ENCODE measurements at regions of chr5 and their contacts with region 1.

Region 1: GRCh38 chr5:54443270-54443669 is 12.2 kb upstream of the HSPB3 start:
- DNase-seq: peak in 1 of 2 experiments; percentile 57
- H3K4me3 ChIP-seq: no peak overlapping the region
- H3K4me3 Mint-ChIP-seq: no peak overlapping the region
- H3K27ac Mint-ChIP-seq: peak overlapping the region; percentile 56
- H3K4me1 ChIP-seq: peaks cover 91% of the 10 kb centered on the region
- H3K4me1 Mint-ChIP-seq: peaks cover 51% of the 10 kb centered on the region
- H3K27me3 ChIP-seq: no peaks in the 10 kb centered on the region
- H3K27me3 Mint-ChIP-seq: no peaks in the 10 kb centered on the region
- CTCF ChIP-seq: peak; percentile 50 to 51

Region 2: DNA sequence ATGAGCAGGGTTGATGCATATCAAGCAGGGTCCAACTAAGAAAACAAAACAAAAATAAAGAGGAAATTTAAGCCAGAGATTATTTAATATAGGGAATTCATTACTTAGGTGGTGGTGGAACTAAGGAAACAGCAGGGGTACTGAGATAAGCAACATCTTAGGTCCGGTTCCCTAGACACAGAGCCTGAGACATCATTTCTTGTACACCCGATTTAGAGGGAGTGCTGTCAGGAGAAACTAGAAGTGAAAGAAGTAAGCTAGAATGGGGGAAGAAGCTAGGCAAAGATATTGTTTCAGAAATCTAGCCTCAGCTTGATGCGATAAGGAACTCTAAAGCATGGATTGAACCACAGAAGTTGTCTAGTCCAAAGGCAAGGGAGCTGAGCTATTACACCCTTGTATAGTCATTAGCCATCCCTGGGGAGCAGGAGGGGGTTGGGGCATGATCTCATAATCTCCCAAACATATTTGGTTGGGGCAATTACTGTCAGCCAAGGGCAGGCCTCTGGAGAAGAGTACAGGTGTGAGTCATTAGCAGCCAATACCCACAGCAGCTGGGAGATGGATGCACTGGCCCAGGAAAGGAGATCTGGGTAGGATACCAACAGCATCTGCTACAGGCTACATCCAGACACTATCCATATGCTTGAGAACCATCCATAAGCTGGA is 327.4 kb before region 1 on chr5:
- CTCF ChIA-PET with region 1: no interaction called
- POLR2A ChIA-PET with region 1: no interaction called
- intact Hi-C with region 1: no loop called
- DNase-seq: no peak
- H3K4me3 ChIP-seq: no peak overlapping the region
- H3K4me3 Mint-ChIP-seq: no peak overlapping the region
- H3K27ac Mint-ChIP-seq: no peak overlapping the region
- H3K4me1 ChIP-seq: no peaks in the 10 kb centered on the region
- H3K4me1 Mint-ChIP-seq: no peaks in the 10 kb centered on the region
- H3K27me3 ChIP-seq: no peaks in the 10 kb centered on the region
- H3K27me3 Mint-ChIP-seq: no peaks in the 10 kb centered on the region
- CTCF ChIP-seq: no peak

Region 3: GRCh38 chr5:54186912-54187445 is 256.3 kb before region 1 on chr5:
- CTCF ChIA-PET with region 1: no interaction called
- POLR2A ChIA-PET with region 1: no interaction called
- intact Hi-C with region 1: no loop called
- DNase-seq: no peak
- H3K4me3 ChIP-seq: no peak overlapping the region
- H3K4me3 Mint-ChIP-seq: no peak overlapping the region
- H3K27ac Mint-ChIP-seq: no peak overlapping the region
- H3K4me1 ChIP-seq: peaks cover 10% of the 10 kb centered on the region
- H3K4me1 Mint-ChIP-seq: peaks cover 19% of the 10 kb centered on the region
- H3K27me3 ChIP-seq: no peaks in the 10 kb centered on the region
- H3K27me3 Mint-ChIP-seq: no peaks in the 10 kb centered on the region
- CTCF ChIP-seq: no peak

Region 4: DNA sequence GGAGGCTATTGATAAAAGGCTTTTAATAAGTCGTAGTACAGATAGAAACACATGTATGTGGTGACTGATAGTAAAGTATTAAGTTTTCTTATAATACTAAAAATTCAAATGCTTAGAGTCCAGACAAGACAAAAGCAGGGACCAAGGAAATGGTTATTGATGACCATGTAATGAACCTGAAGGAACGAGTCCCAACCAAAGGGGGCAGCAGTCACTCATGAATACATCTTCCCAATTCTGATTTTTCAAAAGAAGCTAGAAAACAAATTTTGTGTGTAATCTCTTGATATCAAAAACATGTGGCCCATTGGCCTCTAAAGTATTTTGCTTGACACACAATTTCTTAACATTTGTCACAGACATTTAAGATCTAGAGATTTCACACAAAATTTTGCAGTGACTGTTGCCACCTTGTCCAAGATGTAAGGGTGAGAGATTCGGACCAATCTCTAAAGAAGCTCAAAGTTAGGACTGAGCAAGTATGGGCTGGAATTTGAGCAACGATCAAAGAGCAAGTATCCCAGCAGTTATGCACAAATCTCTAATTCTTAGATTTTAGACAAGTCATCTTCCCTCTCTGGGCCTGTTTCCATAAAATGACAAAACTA is 199.7 kb before region 1 on chr5:
- CTCF ChIA-PET with region 1: no interaction called
- POLR2A ChIA-PET with region 1: no interaction called
- intact Hi-C with region 1: loop called (anchors 2 kb)
- DNase-seq: peak in 1 of 2 experiments; percentile 62
- H3K4me3 ChIP-seq: no peak overlapping the region
- H3K4me3 Mint-ChIP-seq: no peak overlapping the region
- H3K27ac Mint-ChIP-seq: no peak overlapping the region
- H3K4me1 ChIP-seq: 0 out of 2 replicates have a peak, but pooled peaks cover 9% of the 10 kb centered on the region
- H3K4me1 Mint-ChIP-seq: peaks cover 10% of the 10 kb centered on the region
- H3K27me3 ChIP-seq: no peaks in the 10 kb centered on the region
- H3K27me3 Mint-ChIP-seq: no peaks in the 10 kb centered on the region
- CTCF ChIP-seq: peak; percentile 78 to 83

Region 5: GRCh38 chr5:54252002-54252401 is 191.3 kb before region 1 on chr5:
- CTCF ChIA-PET with region 1: no interaction called
- POLR2A ChIA-PET with region 1: no interaction called
- intact Hi-C with region 1: loop called (anchors 2 kb)
- DNase-seq: peak; percentile 40 to 59
- H3K4me3 ChIP-seq: no peak overlapping the region
- H3K4me3 Mint-ChIP-seq: no peak overlapping the region
- H3K27ac Mint-ChIP-seq: peak overlapping the region; percentile 30
- H3K4me1 ChIP-seq: peaks cover 42% of the 10 kb centered on the region
- H3K4me1 Mint-ChIP-seq: peaks cover 9% of the 10 kb centered on the region
- H3K27me3 ChIP-seq: no peaks in the 10 kb centered on the region
- H3K27me3 Mint-ChIP-seq: no peaks in the 10 kb centered on the region
- CTCF ChIP-seq: no peak

Region 6: DNA sequence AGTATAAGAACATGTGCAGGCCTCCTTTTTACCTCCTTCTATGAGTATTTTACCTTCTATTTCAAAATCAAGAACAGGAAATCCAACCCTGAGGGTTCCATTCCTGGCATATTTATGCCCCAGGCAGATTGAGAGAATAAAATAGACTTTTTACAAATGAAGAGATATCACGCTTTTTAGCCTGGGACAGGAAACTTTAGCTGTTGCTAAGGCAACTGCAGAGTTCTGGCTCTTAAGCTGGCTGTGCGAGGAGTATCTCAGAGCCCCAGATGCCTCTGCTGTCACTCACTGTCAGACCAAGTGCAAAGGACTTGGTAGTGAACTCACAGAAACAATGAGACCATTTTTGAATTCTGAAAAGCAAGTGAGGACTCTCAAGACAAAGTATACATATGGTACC is 57.3 kb before region 1 on chr5:
- CTCF ChIA-PET with region 1: interaction called, 3 read pairs
- POLR2A ChIA-PET with region 1: interaction called, 4 read pairs
- intact Hi-C with region 1: loop called (anchors 1 kb)
- DNase-seq: no peak
- H3K4me3 ChIP-seq: no peak overlapping the region
- H3K4me3 Mint-ChIP-seq: no peak overlapping the region
- H3K27ac Mint-ChIP-seq: no peak overlapping the region
- H3K4me1 ChIP-seq: peaks cover 47% of the 10 kb centered on the region
- H3K4me1 Mint-ChIP-seq: peaks cover 26% of the 10 kb centered on the region
- H3K27me3 ChIP-seq: no peaks in the 10 kb centered on the region
- H3K27me3 Mint-ChIP-seq: no peaks in the 10 kb centered on the region
- CTCF ChIP-seq: no peak

Region 7: DNA sequence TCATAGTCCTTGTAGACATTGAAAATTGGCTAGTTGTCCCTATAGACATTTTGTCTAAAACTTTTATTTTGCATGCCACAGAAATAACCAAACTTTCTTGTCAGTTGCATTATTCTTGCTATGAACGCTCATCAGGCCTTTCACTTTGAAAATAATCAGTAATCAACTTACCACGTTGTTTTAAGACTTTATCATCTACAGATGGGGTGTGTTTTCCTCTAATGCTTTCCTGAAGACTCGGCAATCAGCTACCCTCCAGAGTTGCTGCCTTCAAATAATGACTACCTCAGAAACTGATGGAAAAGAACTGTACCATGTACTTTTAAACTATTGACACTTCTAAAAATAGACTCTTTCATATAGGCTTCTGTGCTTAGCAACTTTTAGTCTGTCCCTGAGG is 21.3 kb before region 1 on chr5:
- CTCF ChIA-PET with region 1: interaction called, 3 read pairs
- POLR2A ChIA-PET with region 1: no interaction called
- intact Hi-C with region 1: loop called (anchors 2 kb)
- DNase-seq: no peak
- H3K4me3 ChIP-seq: no peak overlapping the region
- H3K4me3 Mint-ChIP-seq: no peak overlapping the region
- H3K27ac Mint-ChIP-seq: no peak overlapping the region
- H3K4me1 ChIP-seq: peaks cover 10% of the 10 kb centered on the region; the same call in 1 of the 2 replicates
- H3K4me1 Mint-ChIP-seq: peaks cover 15% of the 10 kb centered on the region
- H3K27me3 ChIP-seq: no peaks in the 10 kb centered on the region
- H3K27me3 Mint-ChIP-seq: no peaks in the 10 kb centered on the region
- CTCF ChIP-seq: no peak

Region 8: DNA sequence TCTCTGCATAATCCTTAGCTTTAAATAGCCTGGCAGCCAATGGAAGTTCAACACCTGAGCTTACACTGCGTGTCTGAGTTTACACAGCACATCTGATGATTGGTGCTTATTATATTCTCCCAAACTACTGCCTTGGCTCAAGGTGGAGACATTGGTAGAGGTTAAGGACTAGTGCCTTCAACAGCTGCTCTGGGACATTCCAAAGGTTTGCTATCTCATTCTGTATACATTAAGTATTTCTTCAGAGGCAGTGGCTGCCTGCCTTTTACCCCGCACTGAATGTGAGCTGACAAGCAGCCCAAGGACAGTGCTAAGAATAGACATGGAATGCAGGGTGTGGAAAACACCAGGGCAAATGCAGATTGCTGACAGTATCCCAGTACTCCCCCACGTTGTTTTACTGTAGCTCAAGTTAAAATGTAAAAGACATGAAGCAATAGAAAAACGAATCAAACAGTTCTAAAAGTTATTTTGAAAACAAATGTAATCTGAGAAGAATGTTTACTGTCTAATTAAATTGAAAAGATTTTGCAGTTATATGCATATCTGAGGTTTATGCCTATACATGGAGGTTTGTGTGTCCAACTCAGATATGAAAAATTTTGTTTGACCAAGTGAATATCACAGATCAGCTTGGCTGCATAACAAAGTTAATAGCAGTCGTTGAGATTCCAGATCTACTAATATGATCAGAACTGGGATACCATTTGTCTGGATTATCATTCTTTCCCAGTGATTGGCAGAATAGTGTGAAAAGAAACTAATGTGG is 14.0 kb after region 1 on chr5:
- CTCF ChIA-PET with region 1: interaction called, 16 read pairs
- POLR2A ChIA-PET with region 1: interaction called, 30 read pairs
- intact Hi-C with region 1: loop called (anchors 1 kb)
- DNase-seq: peak; percentile 89 to 96
- H3K4me3 ChIP-seq: no peak overlapping the region
- H3K4me3 Mint-ChIP-seq: peak overlapping the region; percentile 55
- H3K27ac Mint-ChIP-seq: peak overlapping the region; percentile 94
- H3K4me1 ChIP-seq: peaks cover 39% of the 10 kb centered on the region
- H3K4me1 Mint-ChIP-seq: peaks cover 22% of the 10 kb centered on the region
- H3K27me3 ChIP-seq: no peaks in the 10 kb centered on the region
- H3K27me3 Mint-ChIP-seq: no peaks in the 10 kb centered on the region
- CTCF ChIP-seq: no peak

Region 9: DNA sequence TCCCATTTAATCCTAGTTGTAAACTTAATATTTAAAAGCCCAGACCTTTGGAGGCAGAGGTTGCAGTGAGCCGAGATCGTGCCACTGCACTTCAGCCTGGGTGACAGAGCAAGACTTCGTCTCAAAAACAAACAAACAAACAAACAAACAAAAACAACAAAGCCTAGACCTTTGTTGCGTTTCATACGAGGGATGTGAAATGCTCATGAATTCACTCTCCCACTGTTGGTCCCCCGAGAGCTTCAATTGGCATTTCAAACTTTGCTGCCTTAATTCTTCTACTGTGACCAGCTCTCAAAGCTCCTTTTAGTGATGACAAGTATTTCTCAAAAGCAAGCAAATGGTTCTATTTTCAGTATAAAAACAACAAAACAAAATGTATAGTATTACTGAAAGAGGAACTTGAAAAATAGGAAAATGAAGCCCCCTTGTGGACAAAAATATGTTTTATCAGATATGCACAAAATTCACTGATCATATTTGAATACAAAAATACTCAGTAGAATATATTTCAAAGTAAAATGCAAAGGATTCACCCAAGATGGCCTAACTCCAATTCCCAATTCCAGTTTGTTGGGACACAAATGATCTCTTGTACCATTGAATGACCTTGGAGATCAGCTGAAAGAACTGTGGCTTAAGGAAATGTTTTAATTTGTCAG is 401.8 kb after region 1 on chr5:
- CTCF ChIA-PET with region 1: no interaction called
- POLR2A ChIA-PET with region 1: no interaction called
- intact Hi-C with region 1: no loop called
- DNase-seq: peak in 1 of 2 experiments; percentile 18
- H3K4me3 ChIP-seq: no peak overlapping the region
- H3K4me3 Mint-ChIP-seq: no peak overlapping the region
- H3K27ac Mint-ChIP-seq: no peak overlapping the region
- H3K4me1 ChIP-seq: no peaks in the 10 kb centered on the region
- H3K4me1 Mint-ChIP-seq: no peaks in the 10 kb centered on the region
- H3K27me3 ChIP-seq: no peaks in the 10 kb centered on the region
- H3K27me3 Mint-ChIP-seq: peaks cover 11% of the 10 kb centered on the region
- CTCF ChIP-seq: peak; percentile 41 to 50